ENCODE measurements at regions of chr7 and their contacts with region 1.

Region 1: GRCh38 chr7:116588641-116589594 is 64.1 kb downstream of the CAV1 start:
- H3K4me3 ChIP-seq: no peak overlapping the region
- H3K27ac ChIP-seq: no peak overlapping the region
- H3K4me1 ChIP-seq: peaks cover 10% of the 10 kb centered on the region
- CTCF ChIP-seq: peak; percentile 30; the same call in 1 of the 2 replicates

Region 2: DNA sequence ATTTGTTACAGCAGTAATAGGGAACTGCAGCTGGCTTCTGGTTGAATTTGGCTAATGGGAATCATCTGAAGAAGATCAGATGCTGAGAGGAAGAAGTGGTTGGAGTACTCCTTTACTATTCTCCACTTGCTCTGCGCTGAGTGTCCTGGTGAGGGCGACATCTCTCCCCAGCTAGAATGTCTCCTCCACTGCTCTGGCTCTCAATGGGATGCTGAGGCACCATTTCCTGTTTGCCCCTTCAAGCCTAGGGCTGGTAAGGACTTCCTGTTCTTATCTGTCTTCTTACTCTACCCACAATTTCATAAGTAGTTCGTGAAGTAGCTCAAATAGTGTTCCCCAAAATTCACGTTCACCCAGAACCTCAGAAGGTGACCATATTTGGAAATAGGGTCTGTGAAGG is 421.7 kb before region 1 on chr7:
- CTCF ChIA-PET with region 1: interaction called, 26 read pairs
- POLR2A ChIA-PET with region 1: no interaction called
- H3K4me3 ChIP-seq: no peak overlapping the region
- H3K27ac ChIP-seq: no peak overlapping the region
- H3K4me1 ChIP-seq: no peaks in the 10 kb centered on the region
- CTCF ChIP-seq: no peak

Region 3: GRCh38 chr7:116242178-116242577 is 346.7 kb before region 1 on chr7:
- CTCF ChIA-PET with region 1: interaction called, 13 read pairs
- POLR2A ChIA-PET with region 1: no interaction called
- H3K4me3 ChIP-seq: no peak overlapping the region
- H3K27ac ChIP-seq: no peak overlapping the region
- H3K4me1 ChIP-seq: no peaks in the 10 kb centered on the region; the same call in 1 of the 2 replicates
- CTCF ChIP-seq: no peak

Region 4: DNA sequence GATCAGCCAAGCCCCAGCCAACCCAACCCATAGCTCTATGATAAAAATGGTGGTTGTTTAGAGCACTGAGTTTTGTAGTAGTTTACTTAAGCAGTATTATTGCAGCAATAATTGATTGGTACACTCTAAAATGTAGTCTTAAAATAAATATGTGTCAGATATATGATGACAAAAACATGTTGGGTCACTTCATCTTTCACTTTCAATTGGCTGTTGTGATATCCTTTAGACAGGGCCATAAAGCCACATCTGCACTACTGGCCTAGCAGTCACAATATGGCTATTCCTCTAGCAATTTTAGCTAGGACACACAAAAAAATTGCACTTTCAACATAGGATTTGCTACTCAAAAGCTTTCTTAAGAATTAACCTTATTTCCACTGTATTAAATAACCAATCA is 70.0 kb before region 1 on chr7:
- CTCF ChIA-PET with region 1: no interaction called
- POLR2A ChIA-PET with region 1: no interaction called
- H3K4me3 ChIP-seq: no peak overlapping the region
- H3K27ac ChIP-seq: no peak overlapping the region
- H3K4me1 ChIP-seq: no peaks in the 10 kb centered on the region
- CTCF ChIP-seq: no peak

Region 5: DNA sequence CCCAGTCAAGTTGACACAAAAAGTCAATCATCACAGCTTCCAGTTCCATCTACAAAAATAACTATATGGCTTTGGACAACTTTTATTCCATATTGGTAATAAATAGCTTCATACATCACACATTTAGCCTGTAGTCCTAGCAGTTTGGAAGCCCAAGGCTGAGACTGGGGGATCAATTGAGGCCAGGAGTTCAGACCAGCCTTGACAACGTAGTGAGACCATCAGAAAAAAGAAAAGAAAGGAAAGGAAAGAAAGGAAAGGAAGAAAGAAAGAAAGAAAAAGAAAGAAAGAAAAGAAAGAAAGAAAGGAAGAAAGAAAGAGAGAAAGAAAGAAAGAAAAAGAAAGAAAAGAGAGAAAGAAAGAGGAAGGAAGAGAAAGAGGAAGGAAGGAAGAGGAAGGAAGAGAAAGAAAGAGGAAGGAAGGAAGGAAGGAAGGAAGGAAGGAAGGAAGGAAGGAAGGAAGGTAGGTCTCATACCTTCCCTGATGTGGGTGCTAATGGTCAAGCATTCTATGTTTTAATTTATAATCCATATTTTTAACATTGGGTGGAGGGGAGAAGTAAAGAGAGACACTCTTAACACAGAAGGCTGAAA is 26.3 kb before region 1 on chr7:
- CTCF ChIA-PET with region 1: interaction called, 10 read pairs
- POLR2A ChIA-PET with region 1: no interaction called
- H3K4me3 ChIP-seq: no peak overlapping the region
- H3K27ac ChIP-seq: no peak overlapping the region
- H3K4me1 ChIP-seq: peaks cover 8% of the 10 kb centered on the region
- CTCF ChIP-seq: no peak

Region 6: GRCh38 chr7:116671681-116672595 is 83.0 kb after region 1 on chr7 and contains the start of gene MET:
- CTCF ChIA-PET with region 1: interaction called, 18 read pairs
- POLR2A ChIA-PET with region 1: no interaction called
- H3K4me3 ChIP-seq: peak within 1 kb of the TSS; percentile 71
- H3K27ac ChIP-seq: peak within 1 kb of the TSS; percentile 85
- H3K4me1 ChIP-seq: peaks cover 18% of the 10 kb centered on the region; the same call in 1 of the 2 replicates
- CTCF ChIP-seq: peak; percentile 97

Region 7: GRCh38 chr7:116809636-116810266 is 220.8 kb after region 1 on chr7:
- CTCF ChIA-PET with region 1: interaction called, 55 read pairs
- POLR2A ChIA-PET with region 1: no interaction called
- H3K4me3 ChIP-seq: no peak overlapping the region
- H3K27ac ChIP-seq: peak overlapping the region; percentile 39
- H3K4me1 ChIP-seq: peaks cover 29% of the 10 kb centered on the region
- CTCF ChIP-seq: peak; percentile 55; the same call in 1 of the 2 replicates